HepG2 (cell line): ENCODE measurements at regions of chr2 and their contacts with region 1.

Region 1: DNA sequence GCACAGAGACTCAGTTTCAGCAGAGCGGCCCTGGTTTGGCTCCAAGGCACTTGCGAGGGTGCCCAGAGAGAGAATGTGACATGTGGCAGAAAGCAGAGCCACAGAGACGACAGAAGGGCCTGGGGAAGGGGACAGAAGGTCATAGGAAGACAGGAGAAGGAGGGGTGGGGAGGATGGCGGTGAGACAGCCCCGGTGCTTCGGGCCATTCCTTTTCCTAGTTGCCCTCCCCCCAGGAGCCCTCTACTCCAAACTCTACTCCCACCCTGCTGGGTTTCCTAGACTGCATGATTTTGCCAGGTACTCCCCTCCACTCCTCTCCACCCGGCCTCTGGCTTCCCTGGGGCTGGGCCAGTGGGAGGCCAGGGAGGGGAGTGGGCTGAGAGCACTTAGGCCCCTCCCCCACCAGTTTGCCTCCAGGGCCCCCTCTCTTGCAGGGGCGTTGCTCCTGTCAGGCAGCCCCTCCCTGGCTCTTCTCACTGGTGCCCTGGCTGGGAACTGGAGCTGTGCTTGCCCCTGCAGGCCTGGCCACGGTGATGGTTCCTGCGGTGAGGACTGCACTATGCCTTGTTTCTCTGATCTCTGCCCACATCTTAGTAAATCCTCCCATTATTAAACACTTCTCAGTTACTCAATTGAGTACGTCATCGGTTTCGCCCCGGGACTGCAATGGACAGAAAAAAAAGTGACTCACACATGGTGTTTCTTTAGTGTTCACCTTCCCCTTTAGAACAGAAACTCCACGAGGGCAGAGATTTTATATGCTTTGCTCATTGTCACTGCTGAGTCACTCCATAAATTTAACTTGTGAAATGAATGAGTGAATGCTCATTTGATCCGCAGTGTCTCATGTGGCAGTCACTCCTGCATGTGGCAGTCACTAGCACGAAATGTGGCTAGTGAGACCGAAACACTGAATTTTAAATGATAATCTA is 58.7 kb upstream of the SP3 start:
- DNase-seq: peak; percentile 78
- ATAC-seq: peak; percentile 75
- H3K4me3 ChIP-seq: peak overlapping the region; percentile 32 to 70 (median 39)
- H3K27ac ChIP-seq: no peak overlapping the region
- H3K4me1 ChIP-seq: peaks cover 36% of the 10 kb centered on the region
- H3K27me3 ChIP-seq: peaks cover 0 to under 1% of the 10 kb centered on the region in 2 experiments; a peak in 1 of 5 replicates
- CTCF ChIP-seq: no peak
- EP300 ChIP-seq: no peak
- POLR2A ChIP-seq: no peak
- RAD21 ChIP-seq: no peak

Region 2: DNA sequence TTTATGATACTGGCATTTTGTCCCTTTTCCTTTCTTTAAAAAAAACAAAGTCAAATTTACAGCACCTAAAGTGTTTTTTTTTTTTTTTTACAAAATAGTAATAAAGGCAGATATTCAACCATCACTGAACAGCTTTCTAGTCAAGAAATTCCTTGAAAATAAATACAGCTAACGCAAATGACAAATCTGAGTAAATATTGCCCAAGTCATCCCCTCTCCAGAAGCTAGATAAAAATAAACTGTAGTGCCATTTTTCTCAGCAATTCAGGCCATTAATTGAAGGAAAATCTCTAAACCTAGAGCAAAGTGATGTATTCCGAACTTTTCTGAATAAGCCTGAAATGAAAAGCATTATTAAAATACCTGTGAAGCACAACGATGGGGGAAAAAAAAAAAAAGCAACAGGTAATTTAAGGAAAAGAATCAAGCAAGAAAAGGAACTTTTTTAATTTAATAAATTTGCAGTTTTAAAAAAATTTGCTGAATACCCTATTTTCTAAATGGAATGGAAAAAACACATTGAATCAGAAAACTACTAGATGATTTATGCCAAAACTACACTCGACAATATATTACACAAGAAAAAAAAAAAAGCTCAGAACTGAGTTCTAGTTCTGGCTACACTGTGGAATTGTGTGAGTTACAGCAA is 65.5 kb before region 1 on chr2:
- CTCF ChIA-PET with region 1: no interaction called
- POLR2A ChIA-PET with region 1: interaction called, 6 read pairs
- in situ Hi-C with region 1: no loop called
- intact Hi-C with region 1: loop called (anchors 1 kb)
- DNase-seq: peak; percentile 40
- ATAC-seq: no peak
- H3K4me3 ChIP-seq: no peak overlapping the region
- H3K27ac ChIP-seq: no peak overlapping the region
- H3K4me1 ChIP-seq: peaks cover 63% of the 10 kb centered on the region
- H3K27me3 ChIP-seq: no peaks in the 10 kb centered on the region; a peak in 1 of 5 replicates
- CTCF ChIP-seq: no peak
- EP300 ChIP-seq: peak in 1 of 2 experiments; percentile 59; a peak in 2 of 4 replicates
- POLR2A ChIP-seq: no peak
- RAD21 ChIP-seq: no peak

Region 3: DNA sequence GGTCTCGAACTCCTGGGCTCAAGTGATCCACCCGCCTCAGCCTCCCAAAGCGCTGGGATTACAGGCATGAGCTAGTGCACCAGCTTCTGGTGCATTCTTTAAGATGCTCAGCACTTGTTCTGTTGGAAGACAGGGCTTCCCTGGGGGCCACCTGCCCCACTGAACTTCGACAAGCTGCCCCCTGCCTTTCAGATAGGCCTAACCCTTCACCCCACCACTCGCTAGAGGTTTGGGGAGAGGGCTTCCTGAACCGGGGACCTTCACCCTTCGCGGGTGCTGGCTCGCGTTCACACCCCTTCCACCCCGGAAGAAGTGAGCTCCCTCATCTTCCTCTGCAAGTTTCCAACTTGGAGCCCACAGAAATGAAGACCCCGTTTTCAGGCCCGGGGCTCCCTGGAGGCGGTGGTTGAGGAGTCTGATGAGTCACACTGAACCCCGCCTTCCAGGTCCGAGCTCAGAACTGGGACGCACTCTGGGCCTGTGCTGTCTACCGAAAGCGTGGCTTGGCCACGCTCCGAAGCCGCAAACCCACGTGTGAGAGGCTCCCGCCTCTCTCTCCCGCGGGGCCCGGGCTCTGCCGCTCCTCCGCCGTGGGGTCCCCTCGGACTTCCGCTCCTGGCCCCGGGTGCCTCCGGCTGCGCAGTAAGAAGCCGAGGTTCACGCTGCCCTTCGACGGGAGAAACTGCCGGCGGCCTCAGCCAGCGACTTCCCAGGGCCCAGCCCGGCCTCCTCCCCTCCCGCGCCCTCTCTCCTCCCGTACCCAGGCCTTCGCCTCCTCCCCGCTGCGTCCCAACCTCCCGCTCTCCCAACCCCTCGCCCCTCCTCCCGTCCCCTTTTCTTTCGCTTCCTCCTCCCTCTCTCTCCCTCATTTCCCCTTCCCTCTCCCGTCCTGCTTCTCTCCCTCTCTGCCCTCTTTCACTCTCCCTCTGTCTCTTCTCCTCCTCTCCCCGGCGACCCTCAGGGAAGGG is 11.2 kb before region 1 on chr2:
- CTCF ChIA-PET with region 1: no interaction called
- POLR2A ChIA-PET with region 1: interaction called, 11 read pairs
- in situ Hi-C with region 1: no loop called
- intact Hi-C with region 1: no loop called
- DNase-seq: no peak
- ATAC-seq: no peak; the same call in 1 of the 3 replicates
- H3K4me3 ChIP-seq: no peak overlapping the region
- H3K27ac ChIP-seq: no peak overlapping the region
- H3K4me1 ChIP-seq: peaks cover 24% of the 10 kb centered on the region
- H3K27me3 ChIP-seq: no peaks in the 10 kb centered on the region
- CTCF ChIP-seq: no peak
- EP300 ChIP-seq: no peak
- POLR2A ChIP-seq: no peak
- RAD21 ChIP-seq: no peak

Region 4: GRCh38 chr2:174039551-174040416 is 15.9 kb after region 1 on chr2:
- CTCF ChIA-PET with region 1: no interaction called
- POLR2A ChIA-PET with region 1: no interaction called
- in situ Hi-C with region 1: no loop called
- intact Hi-C with region 1: loop called (anchors 2 kb)
- DNase-seq: peak; percentile 88
- ATAC-seq: peak; percentile 90
- H3K4me3 ChIP-seq: peak overlapping the region; percentile 48 to 73 (median 54)
- H3K27ac ChIP-seq: peak overlapping the region; percentile 1
- H3K4me1 ChIP-seq: peaks cover 23% of the 10 kb centered on the region
- H3K27me3 ChIP-seq: peaks cover 0 to 4% of the 10 kb centered on the region in 2 experiments; a peak in 2 of 5 replicates
- CTCF ChIP-seq: peak; percentile 91
- EP300 ChIP-seq: no peak
- POLR2A ChIP-seq: no peak
- RAD21 ChIP-seq: peak; percentile 66